Left cardiac atrium (tissue), 4 donors: ENCODE measurements at regions of chr14 and their contacts with region 1.

Region 1: GRCh38 chr14:66662374-66662773 is 154.4 kb downstream of the GPHN start:
- DNase-seq: no peak
- ATAC-seq: no peak

Region 2: GRCh38 chr14:66495218-66496098 is 166.9 kb before region 1 on chr14:
- intact Hi-C with region 1: loop called in 1 of 2 experiments (anchors 10 kb)
- DNase-seq: peak; percentile 28
- ATAC-seq: peak; percentile 86 to 95